ENCODE measurements at regions of chr17 and their contacts with region 1.

Region 1: DNA sequence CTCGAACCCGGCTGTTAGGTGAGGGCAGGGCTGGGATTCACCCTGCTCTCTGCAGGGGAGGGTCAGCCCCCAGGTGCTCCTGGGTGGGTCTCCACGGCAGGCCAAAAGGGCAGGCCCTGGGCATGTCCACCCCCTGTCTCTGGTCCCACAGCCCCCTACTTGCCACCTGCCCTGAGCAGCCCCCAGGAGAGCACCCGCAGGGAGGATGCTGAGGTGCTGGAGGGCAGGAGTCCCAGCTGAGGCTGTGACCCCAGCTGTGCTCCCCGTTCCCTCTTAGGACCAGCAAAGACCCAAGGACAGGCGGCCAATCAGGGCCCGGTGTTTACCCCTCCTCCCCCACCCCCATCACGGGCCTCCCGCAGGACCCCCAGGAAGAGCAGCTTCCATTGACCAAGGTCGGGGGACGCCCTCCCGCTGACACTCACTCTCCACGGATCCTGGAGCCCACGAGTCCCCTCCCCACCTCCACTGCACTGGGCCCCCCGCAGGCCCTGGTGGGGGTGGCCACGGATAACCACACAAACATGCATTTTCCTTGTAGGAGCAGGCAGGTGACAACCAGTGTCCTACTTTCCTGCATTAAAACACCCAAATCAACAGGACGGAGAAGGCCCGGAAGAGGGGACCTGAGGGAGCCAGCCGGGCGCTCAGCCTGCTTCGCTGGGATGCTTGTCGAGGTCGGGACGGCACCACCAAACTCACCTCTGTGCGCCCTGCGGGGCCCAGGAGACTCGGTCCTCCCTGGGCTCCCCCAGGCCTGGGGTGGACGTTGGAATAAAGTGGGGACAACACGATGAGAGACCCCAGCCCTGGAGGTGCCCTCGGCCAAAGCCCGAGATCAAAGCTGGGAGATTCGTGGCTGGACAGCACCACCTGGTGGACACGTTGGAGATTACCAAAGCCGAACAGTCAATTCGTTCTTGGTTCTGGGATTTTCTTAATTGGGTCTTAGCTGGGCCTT is 22.5 kb upstream of the ENPP7 start:
- DNase-seq: peak; percentile 30 to 44
- ATAC-seq: peak; percentile 38 to 72 (median 50)
- H3K4me3 ChIP-seq: peak overlapping the region in 2 of 10 donors; percentile 12 to 27
- H3K27ac ChIP-seq: no peak overlapping the region
- H3K4me1 ChIP-seq: peaks cover 0 to 5% (median 0%) of the 10 kb centered on the region in 9 donors
- H3K27me3 ChIP-seq: peaks cover 0 to 52% (median 26%) of the 10 kb centered on the region in 7 donors
- CTCF ChIP-seq: peak; percentile 69 to 84 (median 81)

Region 2: DNA sequence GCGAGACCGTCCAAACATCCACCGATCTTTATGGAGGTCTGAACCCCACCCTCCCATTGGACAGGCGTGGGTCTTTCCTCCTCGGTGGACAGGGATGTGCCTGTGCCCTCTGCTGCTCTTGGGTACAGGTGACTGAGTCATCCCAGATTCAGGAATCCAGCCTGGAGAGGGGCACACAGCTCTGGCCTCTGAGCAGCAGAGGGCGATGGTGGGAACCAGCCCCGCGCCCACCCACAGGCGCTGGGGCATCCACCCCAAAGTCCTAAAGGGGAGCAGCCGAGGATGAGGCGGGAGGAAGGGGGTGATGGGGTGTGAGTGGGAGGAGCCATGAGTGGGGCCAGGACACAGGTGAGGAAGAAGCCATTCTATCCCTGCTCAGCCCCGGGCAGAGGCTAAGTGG is 598.6 kb before region 1 on chr17:
- intact Hi-C with region 1: loop called in 1 of 10 experiments (anchors 10 kb)
- DNase-seq: no peak
- ATAC-seq: no peak
- H3K4me3 ChIP-seq: no peak overlapping the region
- H3K27ac ChIP-seq: no peak overlapping the region
- H3K4me1 ChIP-seq: peaks cover 0 to 8% (median under 1%) of the 10 kb centered on the region in 9 donors
- H3K27me3 ChIP-seq: peaks cover 0 to 55% (median 40%) of the 10 kb centered on the region in 7 donors
- CTCF ChIP-seq: no peak

Region 3: GRCh38 chr17:79400989-79401703 is 307.1 kb before region 1 on chr17:
- intact Hi-C with region 1: loop called in 6 of 10 experiments (anchors 5 to 10 kb)
- DNase-seq: peak; percentile 50 to 62
- ATAC-seq: peak; percentile 67 to 86 (median 76)
- H3K4me3 ChIP-seq: peak overlapping the region in 8 of 10 donors; percentile 1 to 40 (median 30)
- H3K27ac ChIP-seq: no peak overlapping the region
- H3K4me1 ChIP-seq: peaks cover 0 to 9% (median 4%) of the 10 kb centered on the region in 9 donors
- H3K27me3 ChIP-seq: peaks cover 5 to 98% (median 82%) of the 10 kb centered on the region in 7 donors
- CTCF ChIP-seq: peak; percentile 87 to 95 (median 93)

Region 4: GRCh38 chr17:79413611-79414010 is 294.6 kb before region 1 on chr17:
- intact Hi-C with region 1: loop called in 4 of 10 experiments (anchors 5 to 10 kb)
- DNase-seq: no peak
- ATAC-seq: peak in 2 of 8 donors; percentile 41 to 44
- H3K4me3 ChIP-seq: no peak overlapping the region
- H3K27ac ChIP-seq: no peak overlapping the region
- H3K4me1 ChIP-seq: no peaks in the 10 kb centered on the region
- H3K27me3 ChIP-seq: peaks cover 0 to 88% (median 63%) of the 10 kb centered on the region in 7 donors
- CTCF ChIP-seq: no peak